OCI-LY7 (cell line): ENCODE measurements at regions of chr10 and their contacts with region 1.

Region 1: GRCh38 chr10:123402656-123403055 is 248.5 kb downstream of the BUB3 start:
- DNase-seq: peak; percentile 96
- H3K4me3 ChIP-seq: peak overlapping the region; percentile 39
- H3K27ac ChIP-seq: peak overlapping the region; percentile 97
- H3K4me1 ChIP-seq: peaks cover 60% of the 10 kb centered on the region
- CTCF ChIP-seq: no peak

Region 2: GRCh38 chr10:123119081-123119480 is 283.6 kb before region 1 on chr10:
- CTCF ChIA-PET with region 1: no interaction called
- POLR2A ChIA-PET with region 1: no interaction called
- intact Hi-C with region 1: no loop called
- DNase-seq: no peak
- H3K4me3 ChIP-seq: no peak overlapping the region
- H3K27ac ChIP-seq: no peak overlapping the region
- H3K4me1 ChIP-seq: no peaks in the 10 kb centered on the region
- CTCF ChIP-seq: no peak

Region 3: GRCh38 chr10:123154092-123154921 is 248.3 kb before region 1 on chr10 and contains the start of gene BUB3:
- CTCF ChIA-PET with region 1: interaction called, 6 read pairs
- POLR2A ChIA-PET with region 1: interaction called, 4 read pairs
- intact Hi-C with region 1: loop called (anchors 5 kb)
- DNase-seq: peak; percentile 99
- H3K4me3 ChIP-seq: peak within 1 kb of the TSS; percentile 92
- H3K27ac ChIP-seq: peak within 1 kb of the TSS; percentile 83
- H3K4me1 ChIP-seq: peaks cover 54% of the 10 kb centered on the region
- CTCF ChIP-seq: no peak
- total RNA-seq, gene BUB3: 437 and 526 TPM in 2 replicates

Region 4: GRCh38 chr10:123318516-123318915 is 84.1 kb before region 1 on chr10:
- CTCF ChIA-PET with region 1: no interaction called
- POLR2A ChIA-PET with region 1: no interaction called
- intact Hi-C with region 1: no loop called
- DNase-seq: no peak
- H3K4me3 ChIP-seq: no peak overlapping the region
- H3K27ac ChIP-seq: no peak overlapping the region
- H3K4me1 ChIP-seq: no peaks in the 10 kb centered on the region
- CTCF ChIP-seq: no peak

Region 5: DNA sequence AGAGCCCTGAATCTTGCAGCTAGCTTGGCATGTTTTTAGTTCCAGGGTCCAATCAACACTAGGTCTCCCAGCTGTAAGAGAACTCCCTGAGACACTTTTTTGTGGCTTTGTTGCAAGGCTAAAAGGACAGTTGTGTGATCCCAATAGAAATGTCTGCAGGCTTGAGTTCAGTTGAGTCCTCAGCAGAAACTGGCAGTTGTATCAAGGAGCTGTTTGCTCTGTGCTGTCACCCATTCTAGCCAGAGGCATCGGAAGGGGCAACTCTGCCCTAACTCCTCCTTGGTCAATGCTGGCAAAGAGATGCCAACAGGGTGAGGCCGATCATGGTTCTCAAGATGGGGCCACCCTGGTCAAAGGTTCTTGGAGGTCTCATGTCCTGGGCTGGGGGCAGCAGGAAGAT is 24.4 kb before region 1 on chr10:
- CTCF ChIA-PET with region 1: no interaction called
- POLR2A ChIA-PET with region 1: no interaction called
- intact Hi-C with region 1: no loop called
- DNase-seq: no peak
- H3K4me3 ChIP-seq: no peak overlapping the region
- H3K27ac ChIP-seq: no peak overlapping the region
- H3K4me1 ChIP-seq: no peaks in the 10 kb centered on the region
- CTCF ChIP-seq: no peak

Region 6: GRCh38 chr10:123392182-123392963 is 10.3 kb before region 1 on chr10:
- CTCF ChIA-PET with region 1: no interaction called
- POLR2A ChIA-PET with region 1: no interaction called
- intact Hi-C with region 1: loop called (anchors 1 kb)
- DNase-seq: peak; percentile 84
- H3K4me3 ChIP-seq: peak overlapping the region; percentile 10
- H3K27ac ChIP-seq: peak overlapping the region; percentile 60
- H3K4me1 ChIP-seq: peaks cover 36% of the 10 kb centered on the region
- CTCF ChIP-seq: no peak

Region 7: GRCh38 chr10:123537188-123537961 is 134.7 kb after region 1 on chr10:
- CTCF ChIA-PET with region 1: no interaction called
- POLR2A ChIA-PET with region 1: no interaction called
- intact Hi-C with region 1: loop called (anchors 5 kb)
- DNase-seq: peak; percentile 72
- H3K4me3 ChIP-seq: peak overlapping the region; percentile 16
- H3K27ac ChIP-seq: peak overlapping the region; percentile 77
- H3K4me1 ChIP-seq: peaks cover 33% of the 10 kb centered on the region
- CTCF ChIP-seq: no peak

Region 8: GRCh38 chr10:124601431-124602120 is 1198.9 kb after region 1 on chr10:
- CTCF ChIA-PET with region 1: no interaction called
- POLR2A ChIA-PET with region 1: no interaction called
- intact Hi-C with region 1: loop called (anchors 5 kb)
- DNase-seq: peak; percentile 92
- H3K4me3 ChIP-seq: peak overlapping the region; percentile 15
- H3K27ac ChIP-seq: peak overlapping the region; percentile 79
- H3K4me1 ChIP-seq: peaks cover 89% of the 10 kb centered on the region
- CTCF ChIP-seq: no peak